Aorta (tissue), 5 donors: ENCODE measurements at regions of chr7 and their contacts with region 1.

Region 1: GRCh38 chr7:134316539-134317344 is at the start of gene SLC35B4:
- DNase-seq: peak; percentile 98 to 99
- ATAC-seq: peak; percentile 99
- H3K4me3 ChIP-seq: peak within 1 kb of the TSS; percentile 75 to 80
- H3K27ac ChIP-seq: peak within 1 kb of the TSS in 1 of 2 donors; percentile 44
- H3K4me1 ChIP-seq: no peaks in the 10 kb centered on the region
- H3K27me3 ChIP-seq: no peaks in the 10 kb centered on the region
- total RNA-seq, gene SLC35B4: 16.0 to 17.9 TPM

Region 2: DNA sequence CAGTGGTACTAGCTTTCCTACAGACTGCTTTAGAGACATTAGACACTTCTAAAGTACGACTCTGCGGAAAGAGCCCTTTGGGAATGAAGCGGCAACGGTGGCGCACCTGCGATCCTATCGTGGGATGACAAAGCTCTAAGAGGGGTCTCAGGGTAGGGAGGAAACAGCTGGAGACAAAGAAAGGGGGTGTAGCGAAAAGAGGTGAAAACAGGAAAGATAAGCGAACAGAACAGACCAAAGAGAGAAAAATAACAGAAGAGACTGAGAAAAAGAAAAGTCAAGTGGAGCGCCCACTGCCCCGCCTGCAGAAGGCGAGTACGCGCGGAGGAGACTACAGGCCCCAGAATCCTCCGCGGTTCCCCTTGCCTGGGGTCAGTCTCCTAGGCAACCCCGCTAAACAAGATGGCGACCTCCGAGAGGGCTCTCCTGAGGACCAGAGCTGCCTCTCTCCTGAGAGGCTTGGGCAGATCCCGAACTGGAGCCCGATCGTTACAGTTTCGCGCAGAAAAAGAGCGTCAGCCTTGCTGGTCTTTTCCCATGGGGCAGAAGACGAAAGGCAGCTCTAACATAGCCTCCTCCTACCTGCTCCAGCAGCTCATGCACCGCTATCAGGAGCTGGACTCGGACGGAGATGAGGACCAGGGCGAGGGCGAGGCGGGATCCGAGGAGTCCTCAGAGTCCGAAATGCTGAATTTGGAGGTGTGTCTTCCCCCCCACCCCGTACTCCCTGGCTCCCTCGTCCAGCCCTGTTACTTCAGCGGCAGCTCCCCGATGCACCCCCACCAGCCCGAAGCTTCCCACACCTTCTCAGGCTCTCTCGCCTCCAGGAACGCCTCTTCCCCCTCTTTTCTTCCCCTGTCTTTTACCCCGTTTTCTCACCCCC is 189.5 kb before region 1 on chr7 and contains the start of gene LRGUK:
- intact Hi-C with region 1: loop called in 1 of 2 experiments (anchors 5 kb)
- DNase-seq: peak; percentile 90 to 93
- ATAC-seq: peak; percentile 97
- H3K4me3 ChIP-seq: peak within 1 kb of the TSS; percentile 34 to 70
- H3K27ac ChIP-seq: no peak within 1 kb of the TSS
- H3K4me1 ChIP-seq: no peaks in the 10 kb centered on the region
- H3K27me3 ChIP-seq: no peaks in the 10 kb centered on the region
- total RNA-seq, gene LRGUK: 0.58 to 1.2 TPM